ENCODE measurements at regions of chr3 and their contacts with region 1.

Region 1: GRCh38 chr3:107676469-107677309 is 153.9 kb downstream of the BBX start:
- DNase-seq: no peak
- ATAC-seq: peak in 1 of 4 donors; percentile 59
- H3K4me3 ChIP-seq: no peak overlapping the region
- H3K27ac ChIP-seq: no peak overlapping the region
- H3K4me1 ChIP-seq: peaks cover 0 to 32% (median 18%) of the 10 kb centered on the region in 12 donors
- H3K27me3 ChIP-seq: no peaks in the 10 kb centered on the region
- CTCF ChIP-seq: peak in 11 of 12 donors; percentile 46 to 71 (median 59)
- POLR2A ChIP-seq: no peak

Region 2: GRCh38 chr3:107377151-107377550 is 299.5 kb before region 1 on chr3 and contains the start of gene CCDC54:
- intact Hi-C with region 1: no loop called
- DNase-seq: no peak
- ATAC-seq: no peak
- H3K4me3 ChIP-seq: no peak within 1 kb of the TSS
- H3K27ac ChIP-seq: no peak within 1 kb of the TSS
- H3K4me1 ChIP-seq: peaks cover 0 to 2% (median 0%) of the 10 kb centered on the region in 12 donors
- H3K27me3 ChIP-seq: no peaks in the 10 kb centered on the region
- CTCF ChIP-seq: no peak
- POLR2A ChIP-seq: no peak
- total RNA-seq, gene CCDC54: not detected

Region 3: GRCh38 chr3:107429320-107430181 is 247.1 kb before region 1 on chr3:
- intact Hi-C with region 1: loop called in 2 of 10 experiments (anchors 10 kb)
- DNase-seq: peak; percentile 80 to 86 (median 81)
- ATAC-seq: peak; percentile 81 to 89 (median 87)
- H3K4me3 ChIP-seq: peak overlapping the region; percentile 15 to 94 (median 78)
- H3K27ac ChIP-seq: peak overlapping the region; percentile 58 to 99 (median 96)
- H3K4me1 ChIP-seq: peaks cover 0 to 27% (median 7%) of the 10 kb centered on the region in 12 donors
- H3K27me3 ChIP-seq: no peaks in the 10 kb centered on the region
- CTCF ChIP-seq: peak; percentile 81 to 92 (median 88)
- POLR2A ChIP-seq: peak in 1 of 2 donors; percentile 25

Region 4: GRCh38 chr3:107574650-107575049 is 102.0 kb before region 1 on chr3:
- intact Hi-C with region 1: loop called in 2 of 10 experiments (anchors 10 kb)
- DNase-seq: no peak
- ATAC-seq: peak in 3 of 4 donors; percentile 67 to 74 (median 69)
- H3K4me3 ChIP-seq: no peak overlapping the region
- H3K27ac ChIP-seq: no peak overlapping the region
- H3K4me1 ChIP-seq: peaks cover 0 to 6% (median 0%) of the 10 kb centered on the region in 12 donors
- H3K27me3 ChIP-seq: no peaks in the 10 kb centered on the region
- CTCF ChIP-seq: peak; percentile 46 to 77 (median 60)
- POLR2A ChIP-seq: no peak

Region 5: GRCh38 chr3:107740992-107741896 is 64.6 kb after region 1 on chr3:
- intact Hi-C with region 1: loop called in 9 of 10 experiments (anchors 2 to 5 kb)
- DNase-seq: no peak
- ATAC-seq: no peak
- H3K4me3 ChIP-seq: no peak overlapping the region
- H3K27ac ChIP-seq: no peak overlapping the region
- H3K4me1 ChIP-seq: peaks cover 0 to 7% (median 0%) of the 10 kb centered on the region in 12 donors
- H3K27me3 ChIP-seq: no peaks in the 10 kb centered on the region
- CTCF ChIP-seq: peak; percentile 29 to 73 (median 57)
- POLR2A ChIP-seq: no peak

Region 6: DNA sequence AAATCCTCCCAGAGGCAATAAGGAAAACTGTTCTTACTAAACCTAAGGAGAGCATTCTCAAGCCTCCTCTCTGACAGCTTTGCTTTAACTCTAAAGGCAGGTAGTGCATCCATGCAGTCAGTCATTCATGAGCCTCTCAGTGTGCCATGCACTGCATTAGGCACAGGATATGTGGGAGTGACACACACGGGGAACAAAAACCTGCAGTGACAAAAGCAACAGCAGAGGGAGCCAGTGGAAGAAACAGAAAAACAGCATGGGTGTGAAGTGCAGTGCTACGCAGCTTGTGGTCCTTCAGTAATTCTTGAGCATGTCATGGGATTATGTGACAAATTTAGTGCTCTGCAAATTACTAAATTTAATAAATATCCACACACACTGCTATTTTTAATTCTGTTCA is 76.8 kb after region 1 on chr3:
- intact Hi-C with region 1: no loop called
- DNase-seq: peak in 2 of 5 donors; percentile 9 to 26
- ATAC-seq: peak in 3 of 4 donors; percentile 29 to 70 (median 58)
- H3K4me3 ChIP-seq: no peak overlapping the region
- H3K27ac ChIP-seq: no peak overlapping the region
- H3K4me1 ChIP-seq: no peaks in the 10 kb centered on the region
- H3K27me3 ChIP-seq: no peaks in the 10 kb centered on the region
- CTCF ChIP-seq: peak in 11 of 12 donors; percentile 20 to 48 (median 39)
- POLR2A ChIP-seq: no peak

Region 7: DNA sequence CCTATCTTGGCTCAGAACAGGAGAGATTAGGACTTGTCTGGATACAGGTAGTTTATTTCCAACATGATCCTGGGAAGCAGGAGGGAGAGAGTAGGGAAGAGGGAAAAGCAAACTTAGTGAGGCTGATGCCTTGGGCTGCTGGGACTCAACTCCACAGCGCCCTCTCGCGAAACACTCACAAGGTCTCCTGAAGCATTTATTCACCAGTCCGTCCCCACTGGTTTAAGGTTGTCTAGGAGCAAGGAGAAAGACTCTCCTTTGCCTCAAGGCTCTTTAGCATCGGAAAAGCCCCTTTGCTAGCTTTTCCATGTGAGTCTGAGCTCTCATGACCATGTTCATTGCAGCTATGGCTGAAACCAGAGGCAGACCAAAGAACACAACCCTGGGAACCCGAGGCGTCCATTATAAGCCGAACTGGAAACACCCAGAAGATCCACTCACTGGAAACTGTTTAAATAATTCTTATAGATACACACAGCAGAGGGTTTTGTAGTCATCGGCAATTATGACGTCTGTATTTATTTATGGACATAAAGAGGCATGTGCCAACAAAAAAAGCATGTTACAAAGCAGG is 169.7 kb after region 1 on chr3:
- intact Hi-C with region 1: loop called in 4 of 10 experiments (anchors 5 to 10 kb)
- DNase-seq: peak; percentile 35 to 65 (median 57)
- ATAC-seq: peak in 3 of 4 donors; percentile 68 to 86 (median 72)
- H3K4me3 ChIP-seq: no peak overlapping the region
- H3K27ac ChIP-seq: no peak overlapping the region
- H3K4me1 ChIP-seq: peaks cover 0 to 5% (median 0%) of the 10 kb centered on the region in 12 donors
- H3K27me3 ChIP-seq: no peaks in the 10 kb centered on the region
- CTCF ChIP-seq: peak; percentile 37 to 72 (median 52)
- POLR2A ChIP-seq: no peak

Region 8: DNA sequence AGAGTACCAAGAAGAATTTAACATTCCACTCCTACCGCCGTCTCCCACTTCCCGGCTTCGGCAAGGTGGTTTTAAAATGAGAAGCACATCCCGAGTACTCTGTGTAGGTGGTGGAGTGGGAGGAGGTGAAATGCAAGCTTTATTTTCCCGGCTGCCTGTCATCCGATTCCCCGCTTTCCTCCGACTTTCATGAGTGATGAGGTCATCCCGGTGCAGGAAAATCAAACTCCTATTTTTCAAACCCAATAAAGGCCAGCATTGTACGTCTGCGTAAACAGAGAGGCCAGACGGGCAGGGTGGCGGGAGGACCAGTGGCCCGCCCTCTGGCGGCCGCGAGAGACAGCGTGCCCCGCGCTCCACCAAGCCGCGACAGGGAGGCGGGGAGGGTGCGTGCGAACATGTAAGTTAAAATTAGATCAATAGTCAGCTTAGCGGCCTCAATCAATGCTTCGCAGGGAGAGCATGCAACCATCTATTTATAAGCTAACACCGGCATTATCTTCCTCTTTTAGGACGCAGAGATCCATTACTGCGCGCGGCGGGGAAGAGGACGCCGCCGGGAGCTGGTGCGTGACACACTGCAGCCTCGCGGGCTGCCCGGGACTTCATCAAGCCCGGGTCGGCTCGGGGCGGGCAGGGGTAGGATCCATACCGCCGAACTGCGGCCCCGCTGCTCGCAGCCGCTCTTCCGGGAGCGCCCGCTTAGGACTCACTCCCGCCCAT is 250.8 kb after region 1 on chr3:
- intact Hi-C with region 1: loop called in 3 of 10 experiments (anchors 5 to 10 kb)
- DNase-seq: peak; percentile 59 to 84 (median 65)
- ATAC-seq: peak; percentile 85 to 99 (median 97)
- H3K4me3 ChIP-seq: peak overlapping the region; percentile 35 to 78 (median 61)
- H3K27ac ChIP-seq: peak overlapping the region in 1 of 12 donors; percentile 29
- H3K4me1 ChIP-seq: peaks cover 0 to 18% (median 7%) of the 10 kb centered on the region in 12 donors
- H3K27me3 ChIP-seq: peaks cover 0 to 15% (median 0%) of the 10 kb centered on the region in 9 donors
- CTCF ChIP-seq: peak; percentile 82 to 97 (median 93)
- POLR2A ChIP-seq: no peak

Region 9: DNA sequence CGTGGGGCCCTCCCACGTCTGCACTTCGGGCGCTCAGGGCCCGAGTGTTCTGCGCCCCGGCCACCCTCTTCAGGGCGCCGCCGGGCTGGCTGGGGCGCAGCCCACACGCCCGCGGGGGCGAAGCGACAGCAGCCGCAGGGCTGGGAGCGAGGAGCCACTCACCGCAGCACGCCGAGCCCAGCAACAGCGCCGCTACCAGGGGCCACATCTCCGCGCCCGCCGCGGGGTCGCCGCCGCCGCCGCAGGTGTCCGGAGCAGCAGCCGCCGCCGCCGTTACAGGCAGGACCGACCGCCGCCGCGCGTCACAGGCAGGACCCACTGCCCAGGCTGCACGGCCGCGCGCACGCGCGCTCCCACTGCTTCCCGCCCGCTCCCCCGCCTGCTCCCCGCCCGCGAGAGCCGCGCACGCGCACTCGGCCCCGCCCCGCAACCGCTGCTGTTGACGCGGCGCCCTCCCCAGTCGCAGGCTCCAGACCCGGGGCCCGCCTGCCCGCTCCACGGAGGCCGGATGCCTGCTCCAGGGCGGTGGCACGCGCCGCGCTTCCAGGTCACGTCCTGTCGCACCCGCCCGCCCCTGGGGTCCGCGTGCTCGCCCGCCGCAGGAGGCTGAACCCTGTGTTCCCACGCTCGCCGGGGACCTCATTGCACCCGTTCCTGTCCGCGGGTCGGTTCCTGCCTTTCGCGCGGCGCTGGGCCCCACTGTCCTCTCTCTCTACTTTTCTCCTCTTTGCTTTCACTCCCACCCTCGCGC is 414.2 kb after region 1 on chr3 and contains the start of gene CD47:
- intact Hi-C with region 1: loop called in 1 of 10 experiments (anchors 10 kb)
- DNase-seq: peak; percentile 95 to 99 (median 96)
- ATAC-seq: peak; percentile 82 to 97 (median 94)
- H3K4me3 ChIP-seq: peak within 1 kb of the TSS; percentile 84 to 99 (median 92)
- H3K27ac ChIP-seq: peak within 1 kb of the TSS; percentile 25 to 97 (median 90)
- H3K4me1 ChIP-seq: peaks cover 0 to 41% (median 19%) of the 10 kb centered on the region in 12 donors
- H3K27me3 ChIP-seq: no peaks in the 10 kb centered on the region
- CTCF ChIP-seq: no peak
- POLR2A ChIP-seq: peak; percentile 19 to 89
- total RNA-seq, gene CD47: 34.4 to 80.6 (median 45.2) TPM

Region 10: GRCh38 chr3:108133858-108134554 is 457.3 kb after region 1 on chr3:
- intact Hi-C with region 1: no loop called
- DNase-seq: no peak
- ATAC-seq: no peak
- H3K4me3 ChIP-seq: peak overlapping the region in 2 of 12 donors; percentile 15 to 16
- H3K27ac ChIP-seq: peak overlapping the region in 1 of 12 donors; percentile 5
- H3K4me1 ChIP-seq: peaks cover 0 to 39% (median 2%) of the 10 kb centered on the region in 12 donors
- H3K27me3 ChIP-seq: no peaks in the 10 kb centered on the region
- CTCF ChIP-seq: no peak
- POLR2A ChIP-seq: no peak

Measured in heart left ventricle (tissue), 16 donors.